CD8-positive, alpha-beta T cell (primary cell): ENCODE measurements at regions of chrX and their contacts with region 1.

Region 1: GRCh38 chrX:19772826-19773628 is 114.4 kb downstream of the SH3KBP1 start:
- DNase-seq: peak in 2 of 9 experiments; percentile 25 to 43
- ATAC-seq: peak; percentile 41
- H3K4me3 ChIP-seq: no peak overlapping the region
- H3K4me3 Mint-ChIP-seq: peak overlapping the region; percentile 58
- H3K27ac ChIP-seq: peak overlapping the region in 1 of 2 experiments; percentile 67
- H3K27ac Mint-ChIP-seq: peak overlapping the region; percentile 91
- H3K4me1 ChIP-seq: peaks cover 78% of the 10 kb centered on the region
- H3K4me1 Mint-ChIP-seq: peaks cover 64% of the 10 kb centered on the region
- H3K27me3 ChIP-seq: no peaks in the 10 kb centered on the region
- H3K27me3 Mint-ChIP-seq: no peaks in the 10 kb centered on the region
- CTCF ChIP-seq: no peak

Region 2: GRCh38 chrX:19705196-19705769 is 67.7 kb before region 1 on chrX:
- CTCF ChIA-PET with region 1: no interaction called
- POLR2A ChIA-PET with region 1: no interaction called
- intact Hi-C with region 1: no loop called
- DNase-seq: no peak
- ATAC-seq: no peak
- H3K4me3 ChIP-seq: no peak overlapping the region
- H3K4me3 Mint-ChIP-seq: no peak overlapping the region
- H3K27ac ChIP-seq: no peak overlapping the region
- H3K27ac Mint-ChIP-seq: peak overlapping the region; percentile 41
- H3K4me1 ChIP-seq: peaks cover 35% of the 10 kb centered on the region
- H3K4me1 Mint-ChIP-seq: peaks cover 62% of the 10 kb centered on the region
- H3K27me3 ChIP-seq: no peaks in the 10 kb centered on the region
- H3K27me3 Mint-ChIP-seq: no peaks in the 10 kb centered on the region
- CTCF ChIP-seq: no peak

Region 3: GRCh38 chrX:19747652-19748610 is 25.1 kb before region 1 on chrX:
- CTCF ChIA-PET with region 1: interaction called, 3 read pairs
- POLR2A ChIA-PET with region 1: interaction called, 12 read pairs
- intact Hi-C with region 1: no loop called
- DNase-seq: peak; percentile 59 to 89 (median 77)
- ATAC-seq: peak; percentile 74
- H3K4me3 ChIP-seq: peak overlapping the region in 1 of 2 experiments; percentile 15
- H3K4me3 Mint-ChIP-seq: peak overlapping the region; percentile 56
- H3K27ac ChIP-seq: peak overlapping the region; percentile 85 to 89
- H3K27ac Mint-ChIP-seq: peak overlapping the region; percentile 99
- H3K4me1 ChIP-seq: peaks cover 99% of the 10 kb centered on the region
- H3K4me1 Mint-ChIP-seq: peaks cover 93% of the 10 kb centered on the region
- H3K27me3 ChIP-seq: no peaks in the 10 kb centered on the region
- H3K27me3 Mint-ChIP-seq: no peaks in the 10 kb centered on the region
- CTCF ChIP-seq: no peak

Region 4: DNA sequence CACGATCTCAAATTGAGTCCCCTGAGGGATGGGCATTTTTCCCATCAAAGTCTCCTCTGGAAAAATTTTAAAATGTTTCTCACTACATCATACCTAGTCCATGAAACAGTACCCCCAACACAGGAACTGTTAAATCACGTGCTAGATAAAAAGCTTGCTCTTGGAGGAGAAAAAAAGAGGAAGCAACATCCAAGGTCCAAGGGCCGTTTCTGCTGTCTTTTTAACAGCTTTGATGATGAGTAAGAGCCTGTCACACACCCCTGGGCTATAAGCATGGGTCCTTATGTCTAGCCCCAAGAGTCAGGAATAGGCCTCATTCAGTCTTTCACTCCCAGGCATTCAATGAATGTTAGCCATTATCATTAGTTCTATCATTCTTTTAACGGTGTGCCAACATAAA is 14.5 kb before region 1 on chrX:
- CTCF ChIA-PET with region 1: interaction called, 3 read pairs
- POLR2A ChIA-PET with region 1: interaction called, 4 read pairs
- intact Hi-C with region 1: loop called in 1 of 2 experiments (anchors 2 kb)
- DNase-seq: no peak
- ATAC-seq: no peak
- H3K4me3 ChIP-seq: no peak overlapping the region
- H3K4me3 Mint-ChIP-seq: no peak overlapping the region
- H3K27ac ChIP-seq: no peak overlapping the region
- H3K27ac Mint-ChIP-seq: peak overlapping the region; percentile 62
- H3K4me1 ChIP-seq: peaks cover 43% of the 10 kb centered on the region
- H3K4me1 Mint-ChIP-seq: peaks cover 77% of the 10 kb centered on the region
- H3K27me3 ChIP-seq: no peaks in the 10 kb centered on the region
- H3K27me3 Mint-ChIP-seq: no peaks in the 10 kb centered on the region
- CTCF ChIP-seq: no peak

Region 5: DNA sequence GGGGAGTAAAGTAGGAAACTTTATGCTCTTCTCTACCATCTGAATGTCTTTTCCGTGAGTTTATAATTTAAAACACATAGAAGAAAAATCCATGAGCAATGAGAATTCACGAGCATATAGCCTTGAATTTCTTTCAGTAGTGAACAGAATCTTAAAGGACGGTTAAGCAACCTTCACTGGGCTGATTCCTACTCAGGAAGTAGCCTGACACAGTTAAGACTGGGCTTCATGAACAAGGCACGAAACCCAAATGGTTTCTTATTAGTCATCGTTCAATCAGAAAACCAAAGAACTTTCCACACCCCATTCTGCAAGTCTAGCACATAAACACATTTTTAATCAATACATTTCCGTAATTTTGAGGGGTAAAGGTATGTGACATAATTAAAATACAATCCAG is 18.5 kb after region 1 on chrX:
- CTCF ChIA-PET with region 1: interaction called, 3 read pairs
- POLR2A ChIA-PET with region 1: no interaction called
- intact Hi-C with region 1: loop called in 1 of 2 experiments (anchors 2 kb)
- DNase-seq: peak in 2 of 9 experiments; percentile 55 to 69
- ATAC-seq: peak; percentile 79
- H3K4me3 ChIP-seq: no peak overlapping the region
- H3K4me3 Mint-ChIP-seq: peak overlapping the region; percentile 61
- H3K27ac ChIP-seq: no peak overlapping the region
- H3K27ac Mint-ChIP-seq: peak overlapping the region; percentile 77
- H3K4me1 ChIP-seq: peaks cover 59% of the 10 kb centered on the region
- H3K4me1 Mint-ChIP-seq: peaks cover 70% of the 10 kb centered on the region
- H3K27me3 ChIP-seq: no peaks in the 10 kb centered on the region
- H3K27me3 Mint-ChIP-seq: no peaks in the 10 kb centered on the region
- CTCF ChIP-seq: no peak

Region 6: DNA sequence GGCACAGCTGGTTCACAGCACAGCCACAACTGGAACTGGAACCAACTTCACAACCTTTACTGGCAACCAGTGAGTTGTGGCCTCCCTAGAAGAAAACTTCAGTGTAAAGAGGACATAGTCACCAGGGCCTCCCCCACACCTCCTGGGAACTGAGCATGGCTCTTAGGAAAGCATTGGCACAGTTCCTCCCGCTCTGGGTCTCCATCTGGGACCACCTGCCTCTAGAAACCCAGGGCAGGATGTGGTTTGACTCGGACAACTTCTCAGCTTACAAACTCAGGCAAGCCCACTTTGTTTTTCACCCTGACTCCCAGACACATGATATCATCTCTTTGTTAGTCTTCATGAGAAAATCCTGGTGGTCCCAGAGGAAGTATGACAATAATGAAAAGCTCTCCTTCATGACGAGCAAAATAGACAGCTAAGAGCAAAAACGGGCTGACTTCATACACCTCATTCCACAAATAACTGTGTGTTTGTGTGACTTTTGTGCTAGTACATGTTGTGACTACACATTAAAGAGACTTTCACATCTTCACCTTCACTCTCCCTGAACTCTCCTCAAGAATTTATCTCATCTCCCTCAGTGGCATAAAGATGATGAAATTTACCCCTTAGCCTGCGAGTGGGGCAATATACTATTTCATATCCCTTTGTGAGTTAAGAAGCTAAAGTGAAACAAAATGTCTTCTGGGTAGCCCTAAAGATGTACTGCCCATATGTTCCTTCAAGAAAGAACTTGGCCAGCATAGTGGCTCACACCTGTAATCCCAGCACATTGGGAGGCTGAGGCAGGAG is 39.0 kb after region 1 on chrX:
- CTCF ChIA-PET with region 1: no interaction called
- POLR2A ChIA-PET with region 1: no interaction called
- intact Hi-C with region 1: no loop called
- DNase-seq: peak in 2 of 9 experiments; percentile 37 to 41
- ATAC-seq: no peak
- H3K4me3 ChIP-seq: no peak overlapping the region
- H3K4me3 Mint-ChIP-seq: peak overlapping the region; percentile 27
- H3K27ac ChIP-seq: peak overlapping the region in 1 of 2 experiments; percentile 68
- H3K27ac Mint-ChIP-seq: peak overlapping the region; percentile 73
- H3K4me1 ChIP-seq: peaks cover 32% of the 10 kb centered on the region
- H3K4me1 Mint-ChIP-seq: peaks cover 68% of the 10 kb centered on the region
- H3K27me3 ChIP-seq: no peaks in the 10 kb centered on the region
- H3K27me3 Mint-ChIP-seq: no peaks in the 10 kb centered on the region
- CTCF ChIP-seq: no peak